ENCODE measurements at regions of chr11 and their contacts with region 1.

Region 1: GRCh38 chr11:128884703-128885338 is 6.3 kb upstream of the KCNJ5 start:
- DNase-seq: peak; percentile 77
- H3K4me3 ChIP-seq: no peak overlapping the region
- H3K27ac ChIP-seq: no peak overlapping the region
- H3K4me1 ChIP-seq: no peaks in the 10 kb centered on the region
- H3K27me3 ChIP-seq: no peaks in the 10 kb centered on the region
- CTCF ChIP-seq: peak; percentile 61 to 82 (median 78)
- POLR2A ChIP-seq: no peak

Region 2: GRCh38 chr11:128790196-128790595 is 94.6 kb before region 1 on chr11:
- intact Hi-C with region 1: no loop called
- DNase-seq: peak; percentile 84
- H3K4me3 ChIP-seq: no peak overlapping the region
- H3K27ac ChIP-seq: no peak overlapping the region
- H3K4me1 ChIP-seq: no peaks in the 10 kb centered on the region
- H3K27me3 ChIP-seq: no peaks in the 10 kb centered on the region
- CTCF ChIP-seq: no peak
- POLR2A ChIP-seq: no peak

Region 3: DNA sequence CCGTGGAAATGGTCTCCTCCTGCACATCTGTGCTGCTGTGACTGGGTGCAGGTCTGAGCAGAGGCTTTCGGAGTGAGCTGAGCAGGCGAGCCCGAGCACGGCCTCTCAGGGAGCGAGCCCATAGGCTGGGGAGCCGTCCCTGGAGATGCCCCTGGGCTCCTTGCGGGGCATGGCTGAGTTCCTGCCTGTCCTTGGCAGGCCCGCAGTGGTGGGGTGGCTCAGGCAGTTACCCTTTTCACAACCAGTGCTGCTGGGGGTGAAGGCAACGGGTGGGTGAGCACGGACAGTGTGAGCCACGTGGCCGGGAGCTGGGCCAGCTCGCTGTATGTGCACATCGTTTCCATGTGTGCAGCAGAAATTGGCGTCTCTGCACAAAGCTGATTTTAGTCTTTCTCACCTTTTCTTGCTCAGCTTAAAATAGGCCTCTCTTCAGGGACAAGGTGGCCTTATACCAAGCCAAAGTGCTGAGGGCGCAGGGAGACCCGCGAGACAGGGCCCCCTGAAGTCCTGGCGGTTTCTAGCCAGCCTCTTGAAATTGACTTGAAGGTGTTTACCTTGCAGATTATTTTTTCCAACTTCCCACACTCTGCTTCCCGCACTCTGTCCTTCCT is 58.1 kb after region 1 on chr11 and contains the start of gene TP53AIP1:
- intact Hi-C with region 1: loop called (anchors 5 kb)
- DNase-seq: no peak
- H3K4me3 ChIP-seq: no peak within 1 kb of the TSS
- H3K27ac ChIP-seq: no peak within 1 kb of the TSS
- H3K4me1 ChIP-seq: no peaks in the 10 kb centered on the region
- H3K27me3 ChIP-seq: no peaks in the 10 kb centered on the region
- CTCF ChIP-seq: no peak
- POLR2A ChIP-seq: no peak
- total RNA-seq, gene TP53AIP1: 0.94 to 1.8 TPM